ENCODE measurements at regions of chr12 and their contacts with region 1.

Region 1: DNA sequence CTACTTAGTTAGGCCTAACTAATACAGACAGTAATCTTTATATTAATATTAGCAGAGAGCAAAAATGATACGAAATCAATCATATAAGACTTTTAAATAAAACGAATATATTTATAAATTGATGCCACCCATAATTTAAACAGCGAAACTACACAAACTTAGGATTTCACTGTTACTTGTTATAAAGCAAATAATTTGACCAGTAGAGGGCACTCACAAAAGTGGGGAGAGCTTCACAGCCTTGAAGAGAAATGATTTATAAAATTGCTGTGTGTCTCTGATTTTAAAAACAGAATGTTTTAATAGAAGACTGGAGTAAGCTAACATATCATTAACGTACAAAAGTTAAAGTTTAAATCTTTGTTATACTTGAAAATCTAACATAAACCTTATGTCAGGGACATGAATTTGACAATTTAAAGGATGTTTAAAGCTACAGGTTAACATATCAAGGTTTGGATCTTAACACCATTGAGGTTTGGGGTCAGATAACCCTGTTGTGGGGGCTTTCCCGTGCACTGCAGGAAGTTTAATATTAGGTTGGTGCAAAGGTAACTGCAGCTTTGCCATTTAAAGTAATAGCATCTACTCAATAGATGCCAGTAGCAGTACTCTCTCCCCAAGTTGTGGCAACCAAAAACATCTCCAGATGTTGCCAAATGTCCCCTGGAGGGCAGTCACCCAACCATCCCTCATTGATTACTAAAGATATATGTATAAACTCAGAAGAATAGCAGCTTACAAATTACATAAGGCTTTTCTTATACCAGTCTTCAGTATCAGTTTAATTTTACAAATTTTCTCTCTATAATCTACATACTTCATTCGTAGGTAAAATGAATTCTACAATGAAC is 9.3 kb downstream of the KRAS start:
- DNase-seq: peak; percentile 21
- H3K4me3 ChIP-seq: no peak overlapping the region
- CTCF ChIP-seq: peak; percentile 47

Region 2: GRCh38 chr12:25208554-25208953 is 32.8 kb before region 1 on chr12:
- CTCF ChIA-PET with region 1: interaction called, 27 read pairs
- POLR2A ChIA-PET with region 1: no interaction called
- DNase-seq: no peak
- H3K4me3 ChIP-seq: no peak overlapping the region
- CTCF ChIP-seq: no peak

Region 3: GRCh38 chr12:25332143-25332542 is 90.7 kb after region 1 on chr12:
- CTCF ChIA-PET with region 1: interaction called, 11 read pairs
- POLR2A ChIA-PET with region 1: no interaction called
- DNase-seq: no peak
- H3K4me3 ChIP-seq: no peak overlapping the region
- CTCF ChIP-seq: no peak